ENCODE measurements at regions of chr7 and their contacts with region 1.

Region 1: GRCh38 chr7:100545360-100546128 is 6.5 kb downstream of the AGFG2 start:
- DNase-seq: no peak

Region 2: DNA sequence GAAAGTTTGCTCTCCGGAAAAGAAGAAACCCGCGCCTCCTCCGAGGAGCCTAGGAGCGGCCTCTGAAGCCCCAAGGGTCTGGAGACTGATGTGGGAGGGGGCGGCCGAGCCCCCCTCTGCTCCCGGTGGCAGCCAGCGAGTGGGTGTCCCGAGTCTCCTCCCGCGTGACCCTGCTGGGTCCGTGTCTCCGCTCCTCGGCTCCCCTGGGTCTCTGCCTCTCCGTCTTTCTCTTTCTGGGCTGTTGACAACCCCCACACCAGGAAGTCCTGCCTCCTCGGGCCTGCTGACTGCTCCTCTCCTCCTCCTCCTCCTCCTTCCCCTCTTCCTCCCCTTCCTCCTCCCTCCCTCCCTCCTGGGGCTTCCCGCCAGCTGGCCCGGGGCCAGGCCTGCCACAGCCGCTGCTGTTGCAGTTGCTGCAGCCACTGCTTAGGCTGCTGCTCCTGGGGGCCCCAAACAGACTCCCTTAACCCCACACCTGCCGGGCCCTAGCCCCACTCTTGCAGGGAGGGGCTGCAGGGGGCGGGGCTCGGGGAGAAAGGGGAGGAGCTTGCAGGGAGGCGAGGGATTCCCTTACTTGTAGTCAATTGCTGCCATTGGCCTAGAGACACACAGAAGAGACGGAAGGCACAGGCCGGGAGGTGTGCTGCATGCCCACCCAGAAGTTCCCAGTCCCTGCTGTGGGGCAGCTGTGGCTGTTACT is 66.4 kb before region 1 on chr7 and contains the start of gene TSC22D4:
- in situ Hi-C with region 1: loop called (anchors 10 kb)
- DNase-seq: peak; percentile 97

Region 3: DNA sequence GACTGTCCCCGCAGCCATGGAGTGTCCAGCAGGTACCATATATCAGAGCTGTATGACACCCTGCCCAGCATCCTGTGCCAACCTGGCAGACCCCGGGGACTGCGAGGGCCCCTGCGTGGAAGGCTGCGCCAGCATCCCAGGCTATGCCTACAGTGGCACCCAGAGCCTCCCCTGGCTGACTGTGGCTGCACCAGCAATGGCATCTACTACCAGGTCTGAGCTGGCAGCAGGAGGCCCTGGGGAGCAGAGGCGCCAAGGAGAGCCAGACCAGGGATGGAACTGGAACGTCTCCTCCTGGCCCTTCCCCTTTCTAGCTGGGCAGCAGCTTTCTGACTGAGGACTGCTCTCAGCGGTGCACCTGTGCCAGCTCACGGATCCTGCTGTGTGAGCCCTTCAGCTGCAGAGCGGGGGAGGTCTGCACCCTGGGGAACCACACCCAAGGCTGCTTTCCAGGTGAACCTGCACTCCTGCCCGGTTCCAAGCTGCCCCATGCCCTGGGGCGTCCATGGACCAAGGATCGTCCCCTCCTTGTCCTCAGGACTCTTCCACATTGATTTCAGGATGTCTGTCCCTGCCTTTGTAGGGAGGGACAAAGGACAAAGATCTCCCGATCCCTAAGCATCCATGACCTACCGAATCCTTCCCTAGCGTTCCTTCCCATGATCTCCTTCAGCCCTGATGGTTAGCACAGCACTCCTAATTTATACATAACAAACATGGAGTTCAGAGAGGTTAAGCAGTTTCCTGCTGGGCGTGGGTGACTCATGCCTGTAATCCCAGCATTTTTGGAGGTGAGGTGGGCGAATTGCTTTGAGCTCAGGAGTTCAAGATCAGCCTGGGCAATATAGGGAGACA is 248.5 kb after region 1 on chr7:
- in situ Hi-C with region 1: no loop called
- DNase-seq: no peak

Region 4: DNA sequence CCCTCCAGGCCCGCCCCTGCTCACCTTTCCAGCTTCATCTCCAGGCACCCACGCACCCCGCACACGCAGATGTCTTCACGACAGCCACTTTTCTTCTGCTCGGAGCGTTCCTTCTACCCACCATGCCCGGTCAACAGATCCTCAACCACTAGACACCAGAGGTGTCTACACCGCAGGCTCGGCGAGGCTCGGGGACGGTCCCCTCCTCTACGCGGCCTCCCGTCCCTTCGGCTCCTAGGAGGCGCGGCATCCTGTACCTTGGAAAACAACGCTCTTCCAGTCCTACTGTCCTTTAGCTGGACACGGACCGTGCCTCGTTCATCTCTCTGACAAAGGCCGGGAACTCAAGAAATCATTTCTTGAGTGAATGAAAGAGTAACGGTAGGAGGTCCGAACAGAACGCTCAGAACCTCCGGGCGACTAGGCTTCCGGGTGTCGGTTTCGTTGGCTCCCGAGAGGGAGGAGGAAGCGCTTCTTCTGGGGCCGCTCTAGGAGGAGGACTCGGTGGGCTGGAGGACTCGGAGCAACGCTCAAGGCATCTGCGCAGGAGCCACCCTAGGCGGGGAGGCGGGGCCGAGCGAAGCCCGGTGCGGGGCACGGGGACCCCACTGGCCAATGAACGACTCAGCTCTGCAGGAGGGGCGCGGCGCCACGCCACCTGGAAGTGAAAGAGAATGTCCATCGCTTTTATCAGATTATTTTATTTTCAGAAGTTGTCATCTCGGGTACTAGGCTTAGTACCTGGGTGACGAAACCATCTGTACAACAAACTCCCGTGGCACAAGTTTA is 706.5 kb after region 1 on chr7:
- in situ Hi-C with region 1: no loop called
- DNase-seq: peak; percentile 97